ENCODE measurements at regions of chr20 and their contacts with region 1.

Region 1: GRCh38 chr20:9616833-9617489 is 102.6 kb downstream of the LAMP5 start:
- DNase-seq: peak; percentile 55
- ATAC-seq: peak; percentile 83
- H3K4me3 ChIP-seq: peak overlapping the region; percentile 17 to 45
- H3K27ac ChIP-seq: no peak overlapping the region
- H3K4me1 ChIP-seq: 0 out of 2 replicates have a peak, but pooled peaks cover 2% of the 10 kb centered on the region
- H3K27me3 ChIP-seq: no peaks in the 10 kb centered on the region
- CTCF ChIP-seq: peak; percentile 82

Region 2: GRCh38 chr20:9417665-9418064 is 199.3 kb before region 1 on chr20:
- CTCF ChIA-PET with region 1: no interaction called
- POLR2A ChIA-PET with region 1: no interaction called
- in situ Hi-C with region 1: no loop called
- intact Hi-C with region 1: no loop called
- DNase-seq: no peak
- ATAC-seq: no peak
- H3K4me3 ChIP-seq: no peak overlapping the region
- H3K27ac ChIP-seq: no peak overlapping the region
- H3K4me1 ChIP-seq: no peaks in the 10 kb centered on the region
- H3K27me3 ChIP-seq: no peaks in the 10 kb centered on the region
- CTCF ChIP-seq: no peak

Region 3: GRCh38 chr20:9660236-9660868 is 43.4 kb after region 1 on chr20:
- CTCF ChIA-PET with region 1: no interaction called
- POLR2A ChIA-PET with region 1: no interaction called
- in situ Hi-C with region 1: no loop called
- intact Hi-C with region 1: no loop called
- DNase-seq: no peak
- ATAC-seq: no peak
- H3K4me3 ChIP-seq: no peak overlapping the region
- H3K27ac ChIP-seq: no peak overlapping the region
- H3K4me1 ChIP-seq: no peaks in the 10 kb centered on the region
- H3K27me3 ChIP-seq: no peaks in the 10 kb centered on the region
- CTCF ChIP-seq: no peak

Region 4: GRCh38 chr20:9689041-9689440 is 72.1 kb after region 1 on chr20:
- CTCF ChIA-PET with region 1: no interaction called
- POLR2A ChIA-PET with region 1: no interaction called
- in situ Hi-C with region 1: no loop called
- intact Hi-C with region 1: no loop called
- DNase-seq: no peak
- ATAC-seq: no peak
- H3K4me3 ChIP-seq: no peak overlapping the region
- H3K27ac ChIP-seq: no peak overlapping the region
- H3K4me1 ChIP-seq: no peaks in the 10 kb centered on the region
- H3K27me3 ChIP-seq: no peaks in the 10 kb centered on the region
- CTCF ChIP-seq: no peak

Region 5: DNA sequence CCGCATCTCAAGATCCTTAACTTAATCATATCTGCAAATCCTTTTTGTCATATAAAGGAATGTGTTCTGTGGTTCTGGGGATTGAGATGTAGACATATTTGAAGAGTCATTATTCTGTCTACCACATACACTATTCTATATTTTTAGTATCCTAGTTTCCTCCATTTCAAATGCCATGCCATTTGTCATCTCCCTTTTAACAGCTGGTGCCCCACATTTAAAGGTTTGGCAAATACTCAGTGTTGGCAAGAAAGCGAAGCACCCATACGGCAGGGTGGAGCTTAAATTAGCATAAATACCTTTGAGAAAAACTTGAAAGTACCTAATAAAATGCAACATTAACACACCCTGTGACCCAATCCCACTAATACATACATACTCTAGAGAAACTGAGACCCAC is 190.2 kb after region 1 on chr20:
- CTCF ChIA-PET with region 1: no interaction called
- POLR2A ChIA-PET with region 1: no interaction called
- in situ Hi-C with region 1: no loop called
- intact Hi-C with region 1: no loop called
- DNase-seq: no peak
- ATAC-seq: no peak
- H3K4me3 ChIP-seq: no peak overlapping the region
- H3K27ac ChIP-seq: no peak overlapping the region
- H3K4me1 ChIP-seq: no peaks in the 10 kb centered on the region
- H3K27me3 ChIP-seq: no peaks in the 10 kb centered on the region
- CTCF ChIP-seq: no peak

Region 6: DNA sequence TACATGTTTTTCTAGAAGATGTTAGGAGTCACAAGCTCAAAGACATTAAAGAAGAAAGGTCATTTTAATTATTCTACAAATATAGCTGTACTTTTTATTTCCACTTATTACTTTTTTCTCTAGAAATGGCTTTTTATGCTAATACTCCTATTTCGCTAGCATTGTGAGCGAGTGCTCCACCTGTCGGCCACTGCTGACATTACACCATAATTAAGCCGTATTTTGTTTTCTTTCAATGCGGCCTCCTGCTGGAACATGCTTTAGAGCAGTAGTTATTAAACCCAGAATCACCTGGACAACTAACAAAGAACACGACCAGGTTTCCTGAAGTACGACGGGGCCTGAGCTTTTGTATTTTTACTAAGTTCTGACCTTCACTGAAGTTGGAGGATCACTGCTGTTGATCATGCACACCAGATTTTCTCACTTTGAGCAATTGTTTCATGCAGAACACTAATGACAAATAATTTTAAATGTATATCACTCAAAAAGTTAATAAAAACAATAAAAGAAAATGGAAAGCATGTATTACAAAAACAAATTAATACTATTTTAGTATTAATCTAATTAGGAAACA is 296.0 kb after region 1 on chr20:
- CTCF ChIA-PET with region 1: interaction called, 11 read pairs
- POLR2A ChIA-PET with region 1: no interaction called
- in situ Hi-C with region 1: no loop called
- intact Hi-C with region 1: loop called (anchors 2 kb)
- DNase-seq: peak; percentile 20
- ATAC-seq: no peak
- H3K4me3 ChIP-seq: no peak overlapping the region
- H3K27ac ChIP-seq: no peak overlapping the region
- H3K4me1 ChIP-seq: no peaks in the 10 kb centered on the region
- H3K27me3 ChIP-seq: no peaks in the 10 kb centered on the region
- CTCF ChIP-seq: peak; percentile 89

Region 7: GRCh38 chr20:9978397-9979004 is 361.5 kb after region 1 on chr20:
- CTCF ChIA-PET with region 1: interaction called, 4 read pairs
- POLR2A ChIA-PET with region 1: no interaction called
- in situ Hi-C with region 1: no loop called
- intact Hi-C with region 1: loop called (anchors 1 kb)
- DNase-seq: peak; percentile 84
- ATAC-seq: peak; percentile 95
- H3K4me3 ChIP-seq: no peak overlapping the region
- H3K27ac ChIP-seq: no peak overlapping the region
- H3K4me1 ChIP-seq: no peaks in the 10 kb centered on the region
- H3K27me3 ChIP-seq: no peaks in the 10 kb centered on the region
- CTCF ChIP-seq: peak; percentile 70

Region 8: GRCh38 chr20:10427060-10427692 is 810.2 kb after region 1 on chr20:
- CTCF ChIA-PET with region 1: no interaction called
- POLR2A ChIA-PET with region 1: no interaction called
- in situ Hi-C with region 1: no loop called
- intact Hi-C with region 1: loop called (anchors 1 kb)
- DNase-seq: no peak
- ATAC-seq: peak; percentile 72; the same call in 1 of the 2 replicates
- H3K4me3 ChIP-seq: no peak overlapping the region
- H3K27ac ChIP-seq: no peak overlapping the region
- H3K4me1 ChIP-seq: 0 out of 2 replicates have a peak, but pooled peaks cover 4% of the 10 kb centered on the region
- H3K27me3 ChIP-seq: no peaks in the 10 kb centered on the region
- CTCF ChIP-seq: peak; percentile 84

Region 9: DNA sequence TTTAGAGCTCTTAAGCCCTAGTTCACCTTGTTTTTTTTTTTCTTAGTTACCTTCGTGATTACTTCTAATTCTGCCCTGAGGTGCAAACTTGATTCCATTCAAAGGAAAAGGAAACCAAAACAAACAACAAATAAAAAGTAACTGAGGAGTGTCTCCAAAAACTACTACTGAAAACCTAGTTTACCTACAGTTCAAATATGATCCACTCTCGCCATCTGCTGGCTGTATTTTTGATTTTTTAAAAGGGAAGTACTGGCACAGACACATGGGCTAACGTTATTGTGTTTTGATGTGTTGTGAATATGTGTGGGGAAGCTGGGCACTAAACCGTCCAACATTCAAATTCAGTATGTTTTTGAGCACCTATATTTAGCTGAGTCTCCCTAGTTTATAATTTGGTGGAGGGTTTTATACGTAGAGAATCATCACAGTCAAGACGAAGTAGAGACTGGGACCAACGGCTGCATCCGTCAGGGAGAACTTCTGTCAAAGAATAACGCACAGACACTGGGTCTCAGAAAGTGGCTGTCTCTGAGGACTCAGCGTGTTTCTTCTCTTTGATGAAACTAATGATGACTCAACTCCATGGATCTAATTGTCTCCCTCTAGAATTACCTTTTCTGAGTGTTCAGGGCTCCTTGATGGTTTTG is 1927.2 kb after region 1 on chr20:
- CTCF ChIA-PET with region 1: no interaction called
- POLR2A ChIA-PET with region 1: no interaction called
- in situ Hi-C with region 1: no loop called
- intact Hi-C with region 1: loop called (anchors 5 kb)
- DNase-seq: peak; percentile 48
- ATAC-seq: peak; percentile 90
- H3K4me3 ChIP-seq: peak overlapping the region in 1 of 2 experiments; percentile 32; a peak in 2 of 4 replicates
- H3K27ac ChIP-seq: peak overlapping the region; percentile 86
- H3K4me1 ChIP-seq: peaks cover 16% of the 10 kb centered on the region
- H3K27me3 ChIP-seq: no peaks in the 10 kb centered on the region
- CTCF ChIP-seq: peak; percentile 63

Measured in Panc1 (cell line).